ENCODE measurements at regions of chr17 and their contacts with region 1.

Region 1: DNA sequence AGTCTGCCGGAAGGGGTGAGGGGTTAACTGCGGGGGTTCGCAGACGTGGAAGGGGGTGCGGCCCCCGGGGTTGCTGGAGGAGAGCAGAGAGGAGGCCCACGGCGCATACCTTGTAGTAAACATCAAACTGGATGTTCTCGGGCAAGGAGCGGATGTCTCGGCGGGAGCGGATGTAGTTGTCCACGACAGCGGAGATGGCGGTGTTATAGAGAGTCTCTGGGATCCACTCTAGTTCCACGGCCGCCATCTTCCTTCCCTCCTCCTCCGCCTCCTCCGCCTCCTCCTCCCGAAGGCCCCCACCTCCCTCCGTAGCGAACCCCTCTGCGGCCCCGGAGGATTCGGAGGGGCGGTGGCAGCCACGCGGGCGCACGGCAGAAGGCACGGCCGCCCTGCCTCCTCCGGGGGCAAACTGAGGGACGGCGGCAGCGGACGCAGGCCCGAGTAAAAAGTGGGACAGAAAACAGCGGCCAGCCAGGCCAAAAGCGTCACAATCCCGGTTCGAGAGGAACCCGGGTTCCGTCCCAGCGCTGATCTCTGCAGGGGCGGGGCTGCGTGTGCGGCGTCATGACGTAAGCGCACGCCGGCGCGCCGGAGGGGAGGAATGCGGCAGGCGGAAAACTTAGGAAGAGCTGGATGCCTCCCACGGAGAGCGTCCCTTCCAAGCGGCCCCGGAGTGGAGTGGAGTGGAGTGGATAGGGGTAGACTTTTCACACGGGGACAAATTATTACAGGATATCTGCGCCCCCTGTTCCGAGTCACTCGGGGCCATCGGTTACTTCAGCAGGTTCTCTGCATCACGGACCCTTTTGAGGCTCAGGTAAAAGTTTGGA is at the start of gene APPBP2:
- DNase-seq: peak; percentile 71 to 80 (median 76)
- H3K4me3 ChIP-seq: peak within 1 kb of the TSS; percentile 73 to 99 (median 93)
- H3K4me3 Mint-ChIP-seq: peak within 1 kb of the TSS; percentile 95 to 98
- H3K27ac ChIP-seq: peak within 1 kb of the TSS; percentile 92 to 96
- H3K27ac Mint-ChIP-seq: peak within 1 kb of the TSS; percentile 93 to 98 (median 97)
- H3K4me1 ChIP-seq: peaks cover 22 to 27% of the 10 kb centered on the region in 2 donors
- H3K4me1 Mint-ChIP-seq: peaks cover 26% of the 10 kb centered on the region
- H3K27me3 ChIP-seq: no peaks in the 10 kb centered on the region
- H3K27me3 Mint-ChIP-seq: peaks cover 0 to 2% (median 0%) of the 10 kb centered on the region in 3 donors
- CTCF ChIP-seq: no peak
- polyA plus RNA-seq, gene APPBP2: 6.4 to 14.7 (median 10.4) TPM

Region 2: DNA sequence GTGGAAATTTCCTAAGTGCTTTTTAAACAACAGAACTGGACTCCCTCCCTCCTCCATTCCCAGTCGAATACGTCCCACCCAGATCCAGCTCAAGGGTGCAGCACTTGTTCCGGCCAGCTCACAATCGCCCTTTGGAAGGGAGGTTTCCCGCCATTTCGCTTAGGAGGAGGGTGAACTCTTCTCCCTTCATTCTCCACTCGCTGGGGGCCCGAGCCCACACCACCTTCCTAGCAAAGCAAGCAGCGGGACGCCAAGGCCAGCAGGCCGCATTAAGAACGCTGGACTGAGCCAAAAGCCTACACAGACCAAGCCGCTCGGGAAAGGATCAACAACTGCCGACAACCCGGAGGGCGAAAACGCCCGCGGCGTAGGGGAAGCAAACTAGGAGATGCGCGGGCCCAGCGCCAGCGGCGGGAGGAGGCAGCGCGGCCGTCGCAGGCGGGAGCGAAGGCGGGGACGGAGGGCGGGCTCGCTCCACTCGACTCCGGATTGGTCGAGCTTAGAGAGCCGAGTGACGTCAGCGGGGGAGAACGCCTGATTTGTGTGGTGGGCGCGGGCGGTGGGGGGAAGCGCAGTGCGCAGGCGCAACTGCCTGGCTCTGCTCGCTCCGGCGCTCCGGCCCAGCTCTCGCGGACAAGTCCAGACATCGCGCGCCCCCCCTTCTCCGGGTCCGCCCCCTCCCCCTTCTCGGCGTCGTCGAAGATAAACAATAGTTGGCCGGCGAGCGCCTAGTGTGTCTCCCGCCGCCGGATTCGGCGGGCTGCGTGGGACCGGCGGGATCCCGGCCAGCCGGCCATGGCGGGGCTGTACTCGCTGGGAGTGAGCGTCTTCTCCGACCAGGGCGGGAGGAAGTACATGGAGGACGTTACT is 74.0 kb after region 1 on chr17 and contains the start of gene PPM1D:
- intact Hi-C with region 1: loop called in 1 of 2 experiments (anchors 5 kb)
- DNase-seq: peak; percentile 99
- H3K4me3 ChIP-seq: peak within 1 kb of the TSS; percentile 84 to 93 (median 91)
- H3K4me3 Mint-ChIP-seq: peak within 1 kb of the TSS; percentile 95 to 96
- H3K27ac ChIP-seq: peak within 1 kb of the TSS; percentile 71 to 90
- H3K27ac Mint-ChIP-seq: peak within 1 kb of the TSS; percentile 90 to 97 (median 94)
- H3K4me1 ChIP-seq: peaks cover 50 to 51% of the 10 kb centered on the region in 2 donors
- H3K4me1 Mint-ChIP-seq: peaks cover 61% of the 10 kb centered on the region
- H3K27me3 ChIP-seq: no peaks in the 10 kb centered on the region
- H3K27me3 Mint-ChIP-seq: no peaks in the 10 kb centered on the region
- CTCF ChIP-seq: no peak
- polyA plus RNA-seq, gene PPM1D: 4.7 to 7.3 (median 7.2) TPM